Psoas muscle (tissue), 8 donors: ENCODE measurements at regions of chr2 and their contacts with region 1.

Region 1: GRCh38 chr2:27275211-27276150 is at the start of gene DNAJC5G:
- DNase-seq: no peak
- ATAC-seq: no peak
- H3K4me3 ChIP-seq: no peak within 1 kb of the TSS
- H3K27ac ChIP-seq: no peak within 1 kb of the TSS
- H3K4me1 ChIP-seq: peaks cover 5% of the 10 kb centered on the region
- H3K27me3 ChIP-seq: peaks cover 0 to 2% (median 0%) of the 10 kb centered on the region in 3 donors
- CTCF ChIP-seq: no peak
- total RNA-seq, gene DNAJC5G: not detected

Region 2: GRCh38 chr2:27217217-27218121 is 58.0 kb before region 1 on chr2 and contains the start of gene CAD:
- intact Hi-C with region 1: loop called in 1 of 2 experiments (anchors 5 kb)
- DNase-seq: peak; percentile 88 to 90
- ATAC-seq: peak; percentile 82 to 91 (median 88)
- H3K4me3 ChIP-seq: peak within 1 kb of the TSS; percentile 80
- H3K27ac ChIP-seq: peak within 1 kb of the TSS; percentile 77
- H3K4me1 ChIP-seq: peaks cover 22% of the 10 kb centered on the region
- H3K27me3 ChIP-seq: no peaks in the 10 kb centered on the region
- CTCF ChIP-seq: peak; percentile 11
- total RNA-seq, gene CAD: 7.8 to 8.6 (median 8.2) TPM